AG04450 (cell line): ENCODE measurements at regions of chr9 and their contacts with region 1.

Region 1: DNA sequence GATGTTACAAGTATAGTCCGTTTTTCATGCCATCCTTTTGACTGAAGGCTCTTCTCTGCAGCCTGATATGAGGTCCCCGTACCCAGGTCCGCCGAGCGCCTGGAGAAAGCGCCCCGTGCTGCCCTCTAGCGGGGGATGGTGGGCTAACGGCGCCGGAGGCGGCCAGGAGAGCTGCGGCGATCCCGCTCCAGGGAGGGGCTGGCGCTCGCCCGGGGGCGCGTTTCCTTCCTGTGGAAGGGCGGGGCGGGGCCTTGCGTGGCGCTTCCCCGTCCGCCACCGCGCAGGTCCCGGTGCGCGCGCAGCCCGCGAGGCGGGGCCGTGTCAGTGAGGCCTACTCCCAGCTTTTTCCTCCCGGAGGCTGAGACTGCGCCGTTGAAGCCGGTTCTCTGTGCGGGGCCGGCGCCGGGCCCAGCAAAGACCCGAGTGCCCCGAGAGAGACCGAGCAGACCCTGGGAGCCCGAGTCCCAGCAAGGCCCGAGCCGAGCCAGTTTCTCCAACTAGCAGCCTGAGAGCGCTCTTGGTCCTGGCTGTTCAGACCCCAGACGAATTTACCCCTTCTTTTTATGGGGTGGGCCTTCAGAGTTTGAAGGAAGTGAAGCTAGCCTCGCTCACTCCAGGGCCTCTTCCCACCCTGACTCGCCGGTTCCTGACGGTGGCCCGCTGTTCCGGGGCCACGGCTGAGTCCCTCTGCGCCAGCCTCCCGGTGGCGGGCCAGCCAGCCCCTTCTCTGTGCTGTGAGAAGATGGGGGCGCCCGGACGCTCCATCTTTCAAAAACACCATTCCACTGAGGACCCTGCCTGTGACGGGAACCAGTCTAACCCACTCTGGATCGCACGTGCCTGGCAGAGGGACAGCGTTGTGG is 9.7 kb upstream of the PHF2 start:
- DNase-seq: peak; percentile 87
- H3K4me3 ChIP-seq: peak overlapping the region; percentile 74
- H3K27ac ChIP-seq: peak overlapping the region; percentile 91
- H3K27me3 ChIP-seq: no peaks in the 10 kb centered on the region
- CTCF ChIP-seq: peak; percentile 94

Region 2: DNA sequence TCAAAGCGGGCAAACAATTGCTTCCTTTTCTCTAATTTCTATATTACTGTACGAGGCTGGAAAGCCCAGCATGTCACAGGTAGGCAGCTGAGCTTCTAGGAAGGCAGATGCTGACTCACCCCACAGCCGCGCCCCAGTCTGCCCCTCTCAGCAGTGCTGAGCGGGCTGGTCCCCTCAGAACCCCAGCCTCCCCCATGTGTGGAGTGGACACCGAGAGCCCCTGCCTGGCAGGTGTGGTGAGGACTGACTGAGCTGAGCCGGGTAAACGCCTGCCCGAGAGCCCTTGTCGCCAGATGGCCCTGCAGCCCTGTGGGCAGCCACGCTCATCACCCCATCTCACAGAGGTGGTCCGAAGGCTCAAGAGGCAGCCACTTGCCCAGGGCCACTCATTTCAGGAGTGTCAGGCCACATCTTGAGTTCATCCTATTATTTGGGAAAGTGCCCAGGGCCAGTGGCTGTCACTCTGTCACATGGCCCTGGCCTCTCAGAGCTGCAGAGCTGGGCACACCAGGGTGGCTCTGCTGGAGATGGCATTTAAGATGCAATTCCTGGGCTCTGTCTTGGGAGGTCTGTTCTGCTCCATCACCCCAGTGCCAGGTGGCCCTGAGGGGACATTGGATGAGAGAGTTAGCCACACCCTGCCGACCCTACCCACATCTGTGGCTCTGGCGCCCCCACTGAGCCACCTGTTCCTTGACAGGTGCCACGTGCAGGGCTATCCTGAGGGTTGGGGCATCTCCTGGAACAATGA is 458.2 kb before region 1 on chr9:
- CTCF ChIA-PET with region 1: interaction called, 16 read pairs
- POLR2A ChIA-PET with region 1: interaction called, 3 read pairs
- DNase-seq: no peak
- H3K4me3 ChIP-seq: no peak overlapping the region
- H3K27ac ChIP-seq: no peak overlapping the region
- H3K27me3 ChIP-seq: no peaks in the 10 kb centered on the region
- CTCF ChIP-seq: no peak

Region 3: GRCh38 chr9:93453047-93453914 is 113.4 kb before region 1 on chr9 and contains the start of gene FAM120AOS:
- CTCF ChIA-PET with region 1: interaction called, 63 read pairs
- POLR2A ChIA-PET with region 1: interaction called, 13 read pairs
- DNase-seq: peak; percentile 91
- H3K4me3 ChIP-seq: peak within 1 kb of the TSS; percentile 84
- H3K27ac ChIP-seq: peak within 1 kb of the TSS; percentile 61
- H3K27me3 ChIP-seq: no peaks in the 10 kb centered on the region
- CTCF ChIP-seq: no peak
- polyA plus RNA-seq, gene FAM120AOS: 36.1 and 42.9 TPM in 2 replicates

Region 4: DNA sequence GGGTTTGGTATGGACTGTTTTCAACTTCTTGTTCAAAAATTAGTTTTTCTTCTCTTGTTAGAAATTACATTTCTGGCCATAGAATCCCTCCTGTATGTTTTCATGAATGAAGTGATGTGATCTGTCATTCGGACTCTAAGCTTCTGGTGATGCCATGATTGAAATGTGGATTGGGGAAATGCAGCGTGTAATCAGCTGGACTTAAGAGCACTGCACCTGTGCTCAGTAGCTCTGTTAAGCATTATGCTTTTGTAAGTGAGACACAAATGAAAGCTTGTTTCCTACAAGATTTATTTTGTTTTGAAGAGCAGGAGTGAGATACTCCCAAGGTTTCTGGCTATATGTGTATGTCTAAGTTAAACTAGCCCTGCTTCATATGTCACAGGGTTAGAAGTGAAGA is 89.2 kb before region 1 on chr9:
- CTCF ChIA-PET with region 1: interaction called, 15 read pairs
- POLR2A ChIA-PET with region 1: no interaction called
- DNase-seq: no peak
- H3K4me3 ChIP-seq: no peak overlapping the region
- H3K27ac ChIP-seq: no peak overlapping the region
- H3K27me3 ChIP-seq: no peaks in the 10 kb centered on the region
- CTCF ChIP-seq: no peak

Region 5: DNA sequence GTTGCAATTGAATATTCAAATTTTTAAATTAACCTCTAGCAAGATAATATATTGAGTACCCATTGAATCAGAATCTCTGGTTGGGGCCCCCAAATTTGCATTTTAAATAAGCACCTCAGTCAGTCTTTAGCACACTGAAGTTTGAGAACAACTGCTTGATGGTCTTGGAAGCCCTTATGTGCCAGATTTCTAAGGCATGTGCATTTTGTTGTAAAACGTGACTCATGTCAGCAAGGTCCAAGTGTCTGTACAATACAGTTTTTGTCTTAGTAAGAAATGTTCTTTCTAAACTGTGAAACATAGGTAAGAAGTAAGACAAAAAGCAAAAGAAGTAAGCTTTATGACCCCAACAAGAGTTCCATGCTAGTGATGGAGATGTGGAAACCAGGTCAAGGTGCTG is 49.3 kb before region 1 on chr9:
- CTCF ChIA-PET with region 1: interaction called, 10 read pairs
- POLR2A ChIA-PET with region 1: no interaction called
- DNase-seq: no peak
- H3K4me3 ChIP-seq: no peak overlapping the region
- H3K27ac ChIP-seq: no peak overlapping the region
- H3K27me3 ChIP-seq: no peaks in the 10 kb centered on the region
- CTCF ChIP-seq: no peak

Region 6: DNA sequence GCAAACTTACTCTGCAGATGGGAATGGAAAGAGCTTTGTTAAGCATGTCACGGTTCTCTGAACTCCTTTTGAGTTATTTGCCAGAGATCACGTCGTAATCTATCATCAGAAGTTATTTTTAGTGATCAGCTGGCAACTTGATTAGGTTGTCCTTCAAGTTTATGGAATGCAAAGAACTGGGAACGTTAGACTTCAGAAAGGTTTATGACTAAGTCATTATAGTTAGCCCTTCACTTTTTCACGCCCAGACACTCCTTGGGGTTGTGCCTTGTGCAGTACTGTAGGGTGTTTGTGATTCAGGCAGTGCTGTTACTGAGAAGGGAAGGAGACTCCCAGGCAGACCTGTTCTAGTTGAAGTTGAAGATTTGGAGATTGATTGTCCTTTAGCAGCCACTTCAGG is 17.0 kb before region 1 on chr9:
- CTCF ChIA-PET with region 1: interaction called, 49 read pairs
- POLR2A ChIA-PET with region 1: no interaction called
- DNase-seq: no peak
- H3K4me3 ChIP-seq: no peak overlapping the region
- H3K27ac ChIP-seq: no peak overlapping the region
- H3K27me3 ChIP-seq: no peaks in the 10 kb centered on the region
- CTCF ChIP-seq: no peak

Region 7: DNA sequence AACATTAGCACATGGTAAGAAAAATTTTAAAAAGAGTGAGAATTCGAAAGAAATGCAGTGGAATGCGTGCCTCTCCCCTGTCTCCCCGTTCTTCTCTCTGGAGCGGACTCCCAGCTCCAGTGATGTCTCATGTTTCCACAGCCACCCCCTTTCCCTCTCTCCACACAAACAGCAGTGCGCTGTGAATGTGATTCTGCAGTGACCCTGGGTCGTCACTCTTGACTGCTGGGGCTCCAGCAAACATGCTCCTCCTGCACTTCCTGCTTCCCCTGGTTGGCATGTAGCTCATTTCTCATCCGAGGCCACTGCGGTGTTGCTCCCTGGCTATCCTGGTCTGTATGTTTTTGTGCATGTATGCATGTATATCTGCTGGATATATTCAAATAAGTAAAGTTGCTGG is 23.1 kb after region 1 on chr9:
- CTCF ChIA-PET with region 1: interaction called, 12 read pairs
- POLR2A ChIA-PET with region 1: interaction called, 3 read pairs
- DNase-seq: no peak
- H3K4me3 ChIP-seq: no peak overlapping the region
- H3K27ac ChIP-seq: no peak overlapping the region
- H3K27me3 ChIP-seq: no peaks in the 10 kb centered on the region
- CTCF ChIP-seq: no peak